ENCODE measurements at regions of chr17 and their contacts with region 1.

Region 1: DNA sequence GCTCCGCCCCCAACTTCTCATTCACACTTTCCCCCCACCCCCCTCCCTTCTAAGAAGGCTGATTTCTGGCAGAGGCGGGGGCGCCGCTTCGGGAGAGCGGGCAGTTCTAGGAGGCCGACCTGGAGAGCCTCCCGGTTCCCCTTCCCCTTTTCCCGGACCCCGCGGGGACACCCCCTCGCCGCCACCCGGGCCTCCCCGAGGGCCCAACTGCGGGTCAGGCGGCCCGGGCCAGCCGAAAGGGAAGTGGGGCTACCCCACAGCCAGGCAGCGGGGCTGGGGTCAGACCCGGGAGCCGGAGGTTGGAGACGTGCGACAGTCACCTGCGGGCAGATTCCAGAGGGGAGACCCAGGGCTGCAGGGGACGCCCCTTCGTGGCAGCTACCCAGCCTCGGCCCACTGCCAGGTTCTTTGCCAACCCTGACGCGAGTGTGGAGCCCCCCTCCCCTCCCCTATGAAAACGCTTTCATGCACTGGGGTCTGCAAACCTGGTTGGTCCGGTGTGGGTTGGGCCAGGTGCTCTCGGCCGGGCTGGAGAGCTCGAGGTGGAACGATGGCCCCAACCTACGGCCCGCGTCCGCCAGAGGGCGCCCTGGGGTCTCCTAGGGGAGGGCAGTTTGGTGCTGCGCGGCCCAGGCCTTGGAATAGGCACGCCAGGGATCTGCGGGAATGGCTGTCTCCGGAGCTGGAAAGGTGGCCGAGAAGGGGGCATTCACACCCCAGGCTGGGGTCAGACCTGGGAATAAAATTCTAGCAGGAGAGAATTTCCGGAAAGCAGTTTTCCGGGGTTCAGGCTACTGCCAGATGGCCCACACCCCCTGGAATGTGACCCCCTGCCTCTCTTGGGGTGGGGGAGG is 721 bp upstream of the SOCS3 start:
- DNase-seq: peak; percentile 90
- H3K4me3 Mint-ChIP-seq: peak overlapping the region; percentile 82
- H3K27ac Mint-ChIP-seq: peak overlapping the region; percentile 89
- H3K4me1 Mint-ChIP-seq: peaks cover 47% of the 10 kb centered on the region
- H3K27me3 Mint-ChIP-seq: peaks cover 3% of the 10 kb centered on the region

Region 2: DNA sequence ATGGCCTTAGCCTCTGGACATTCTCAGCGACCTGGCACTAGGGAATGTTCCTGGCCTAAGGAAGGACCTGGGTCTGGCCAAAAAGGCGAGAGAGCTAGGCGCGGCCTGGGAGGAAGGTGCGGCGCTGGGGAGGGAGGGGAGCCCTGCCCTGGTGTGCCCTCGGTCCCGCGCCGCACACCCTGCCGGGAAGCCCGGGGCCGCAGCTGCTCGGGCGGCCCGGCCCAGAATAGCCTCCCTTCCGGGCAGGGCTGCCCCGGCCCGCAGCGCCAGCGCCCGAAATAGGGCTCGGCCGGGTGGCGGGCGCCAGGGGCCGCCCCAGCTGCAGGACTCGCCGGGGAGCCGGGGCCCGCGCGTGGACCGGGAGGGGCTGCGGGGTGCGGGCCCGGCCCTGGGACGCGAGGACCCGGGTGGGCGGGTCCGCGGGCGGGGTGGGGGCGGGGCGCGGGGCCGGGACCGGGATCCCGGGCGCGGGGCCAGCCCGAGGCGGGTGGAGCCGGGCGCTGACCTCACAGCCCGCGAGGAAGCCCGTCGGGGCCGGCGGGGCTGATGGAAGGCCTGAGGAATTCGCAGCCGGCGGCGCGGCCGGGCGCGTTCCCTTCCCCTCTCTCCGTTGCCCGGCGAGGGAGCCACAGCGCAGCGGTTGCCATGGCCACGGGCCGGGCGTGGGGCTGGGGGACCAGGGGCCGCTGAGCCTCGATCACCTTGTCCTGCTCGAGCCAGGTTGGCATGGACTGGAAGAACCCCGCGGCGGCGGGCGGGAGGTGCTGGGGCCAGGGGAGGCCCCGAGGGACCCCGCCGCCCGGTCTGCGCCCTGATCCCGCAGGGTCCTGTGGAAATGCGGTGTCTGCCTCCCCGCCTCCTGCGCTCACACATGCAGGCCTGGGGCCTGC is 18.8 kb before region 1 on chr17:
- CTCF ChIA-PET with region 1: interaction called, 10 read pairs
- POLR2A ChIA-PET with region 1: no interaction called
- DNase-seq: no peak
- H3K4me3 Mint-ChIP-seq: no peak overlapping the region
- H3K27ac Mint-ChIP-seq: no peak overlapping the region
- H3K4me1 Mint-ChIP-seq: peaks cover 60% of the 10 kb centered on the region
- H3K27me3 Mint-ChIP-seq: peaks cover 2% of the 10 kb centered on the region

Region 3: GRCh38 chr17:78378225-78379130 is 17.9 kb after region 1 on chr17 and contains the start of gene PGS1:
- CTCF ChIA-PET with region 1: interaction called, 56 read pairs
- POLR2A ChIA-PET with region 1: no interaction called
- DNase-seq: peak; percentile 87
- H3K4me3 Mint-ChIP-seq: peak within 1 kb of the TSS; percentile 97
- H3K27ac Mint-ChIP-seq: peak within 1 kb of the TSS; percentile 93
- H3K4me1 Mint-ChIP-seq: peaks cover 45% of the 10 kb centered on the region
- H3K27me3 Mint-ChIP-seq: no peaks in the 10 kb centered on the region
- total RNA-seq, gene PGS1: 71.1 to 78.3 TPM

Region 4: GRCh38 chr17:78383725-78384471 is 23.3 kb after region 1 on chr17:
- CTCF ChIA-PET with region 1: interaction called, 17 read pairs
- POLR2A ChIA-PET with region 1: interaction called, 6 read pairs
- DNase-seq: peak; percentile 41
- H3K4me3 Mint-ChIP-seq: peak overlapping the region; percentile 65
- H3K27ac Mint-ChIP-seq: peak overlapping the region; percentile 93
- H3K4me1 Mint-ChIP-seq: peaks cover 90% of the 10 kb centered on the region
- H3K27me3 Mint-ChIP-seq: no peaks in the 10 kb centered on the region

Region 5: DNA sequence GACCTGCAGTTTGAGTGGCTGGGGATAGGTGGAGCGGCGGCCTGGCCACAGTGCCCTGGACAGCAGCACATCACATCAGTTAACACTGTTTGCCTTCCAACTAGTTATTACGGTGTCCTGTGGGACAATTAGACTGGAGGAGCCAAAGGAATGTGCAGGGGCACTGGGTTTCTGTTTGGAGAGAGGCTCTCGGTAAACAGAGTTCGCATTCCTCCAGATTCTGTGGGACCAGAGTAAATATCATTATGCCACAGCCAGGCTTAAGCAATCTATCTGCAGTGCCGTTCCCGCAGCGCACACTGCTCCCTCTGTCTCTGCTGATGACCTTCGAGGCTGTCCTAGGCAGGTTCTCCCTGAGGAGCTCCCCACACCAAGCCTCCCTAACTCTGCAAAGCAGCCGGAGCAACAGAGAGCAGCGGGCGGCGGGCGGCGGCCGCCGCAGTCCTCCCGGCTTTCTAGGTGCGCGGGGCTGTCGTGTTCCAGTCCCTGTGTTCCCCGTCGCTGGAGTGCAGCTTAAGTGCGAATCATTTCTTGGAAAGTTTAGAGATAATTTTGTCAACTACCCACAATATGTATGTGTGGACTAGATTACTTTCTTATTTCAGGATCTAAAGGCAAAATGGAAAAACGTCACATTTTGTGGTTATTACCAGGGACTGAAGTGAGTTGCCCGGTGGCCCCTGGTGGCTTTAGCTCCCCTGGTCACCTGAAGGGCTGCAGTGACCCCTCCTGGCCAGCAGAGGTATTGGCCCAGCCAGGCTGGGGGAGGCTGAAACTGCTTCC is 61.1 kb after region 1 on chr17:
- CTCF ChIA-PET with region 1: interaction called, 24 read pairs
- POLR2A ChIA-PET with region 1: no interaction called
- DNase-seq: peak; percentile 75
- H3K4me3 Mint-ChIP-seq: no peak overlapping the region
- H3K27ac Mint-ChIP-seq: peak overlapping the region; percentile 55
- H3K4me1 Mint-ChIP-seq: peaks cover 41% of the 10 kb centered on the region
- H3K27me3 Mint-ChIP-seq: no peaks in the 10 kb centered on the region